Activated CD8-positive, alpha-beta T cell treated with anti-CD3 and anti-CD28 coated beads, Interleukin-2, amount 10 ng/mL, durations not matched to agents 7 days and 5 days (primary cell): ENCODE measurements at regions of chr12 and their contacts with region 1.

Region 1: DNA sequence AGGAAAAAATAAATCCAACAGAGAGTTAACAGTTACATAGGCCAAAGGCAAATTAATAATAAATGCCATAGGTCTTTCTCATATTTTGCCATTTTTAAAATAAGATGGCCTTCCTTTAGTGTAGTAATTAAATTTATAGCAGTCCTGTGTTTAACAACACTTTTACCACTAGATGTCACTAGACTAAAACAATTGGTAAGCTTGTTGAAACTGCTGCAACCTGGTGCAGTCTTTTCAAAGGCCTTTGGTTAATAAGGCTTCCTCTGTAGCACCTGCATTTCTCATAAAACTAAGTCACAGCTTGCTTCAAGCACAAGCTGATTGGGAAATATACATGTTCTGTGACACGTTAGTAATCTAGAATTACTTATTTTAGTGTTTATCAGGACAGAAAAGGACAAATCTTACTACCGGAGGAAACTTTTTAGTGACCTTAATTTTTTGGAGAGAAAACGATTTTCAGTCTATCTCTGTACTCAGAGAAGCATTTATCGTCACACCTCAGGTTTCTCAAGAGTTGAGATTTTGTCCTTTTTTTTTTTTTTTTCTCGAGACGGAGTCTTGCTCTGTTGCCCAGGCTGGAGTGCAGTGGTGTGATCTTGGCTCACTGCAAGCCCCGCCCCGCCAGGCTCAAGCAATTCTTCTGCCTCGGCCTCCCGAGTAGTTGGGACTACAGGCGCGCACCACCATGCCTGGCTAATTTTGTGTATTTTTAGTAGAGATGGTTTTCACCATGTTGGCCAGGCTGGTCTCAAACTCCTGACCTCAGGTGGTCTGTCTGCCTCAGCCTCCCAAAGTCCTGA is 20.0 kb downstream of the BORCS5 start:
- DNase-seq: peak; percentile 54
- ATAC-seq: peak; percentile 64
- H3K4me3 Mint-ChIP-seq: no peak overlapping the region
- H3K27ac Mint-ChIP-seq: peak overlapping the region; percentile 1
- H3K4me1 Mint-ChIP-seq: peaks cover 42% of the 10 kb centered on the region
- H3K27me3 Mint-ChIP-seq: no peaks in the 10 kb centered on the region

Region 2: GRCh38 chr12:12349711-12350665 is 26.9 kb before region 1 on chr12 and contains the start of gene MANSC1:
- CTCF ChIA-PET with region 1: no interaction called
- POLR2A ChIA-PET with region 1: no interaction called
- DNase-seq: peak; percentile 67
- ATAC-seq: peak; percentile 78
- H3K4me3 Mint-ChIP-seq: peak within 1 kb of the TSS; percentile 68
- H3K27ac Mint-ChIP-seq: peak within 1 kb of the TSS; percentile 47
- H3K4me1 Mint-ChIP-seq: peaks cover 21% of the 10 kb centered on the region
- H3K27me3 Mint-ChIP-seq: peaks cover 4% of the 10 kb centered on the region
- total RNA-seq, gene MANSC1: 0.13 TPM in 1 of 2 experiments, not detected in the other

Region 3: GRCh38 chr12:12365931-12366431 is 10.9 kb before region 1 on chr12:
- CTCF ChIA-PET with region 1: interaction called, 12 read pairs
- POLR2A ChIA-PET with region 1: interaction called, 3 read pairs
- DNase-seq: peak; percentile 55
- ATAC-seq: peak; percentile 60
- H3K4me3 Mint-ChIP-seq: no peak overlapping the region
- H3K27ac Mint-ChIP-seq: peak overlapping the region; percentile 32
- H3K4me1 Mint-ChIP-seq: peaks cover 41% of the 10 kb centered on the region
- H3K27me3 Mint-ChIP-seq: no peaks in the 10 kb centered on the region

Region 4: GRCh38 chr12:12474931-12475795 is 98.3 kb after region 1 on chr12:
- CTCF ChIA-PET with region 1: interaction called, 124 read pairs
- POLR2A ChIA-PET with region 1: interaction called, 15 read pairs
- DNase-seq: peak; percentile 73
- ATAC-seq: peak; percentile 88
- H3K4me3 Mint-ChIP-seq: peak overlapping the region; percentile 58
- H3K27ac Mint-ChIP-seq: peak overlapping the region; percentile 92
- H3K4me1 Mint-ChIP-seq: peaks cover 67% of the 10 kb centered on the region
- H3K27me3 Mint-ChIP-seq: no peaks in the 10 kb centered on the region

Region 5: GRCh38 chr12:12505544-12506495 is 129.0 kb after region 1 on chr12:
- CTCF ChIA-PET with region 1: interaction called, 38 read pairs
- POLR2A ChIA-PET with region 1: no interaction called
- DNase-seq: peak; percentile 24
- ATAC-seq: peak; percentile 52
- H3K4me3 Mint-ChIP-seq: no peak overlapping the region
- H3K27ac Mint-ChIP-seq: peak overlapping the region; percentile 19
- H3K4me1 Mint-ChIP-seq: peaks cover 30% of the 10 kb centered on the region
- H3K27me3 Mint-ChIP-seq: no peaks in the 10 kb centered on the region

Region 6: DNA sequence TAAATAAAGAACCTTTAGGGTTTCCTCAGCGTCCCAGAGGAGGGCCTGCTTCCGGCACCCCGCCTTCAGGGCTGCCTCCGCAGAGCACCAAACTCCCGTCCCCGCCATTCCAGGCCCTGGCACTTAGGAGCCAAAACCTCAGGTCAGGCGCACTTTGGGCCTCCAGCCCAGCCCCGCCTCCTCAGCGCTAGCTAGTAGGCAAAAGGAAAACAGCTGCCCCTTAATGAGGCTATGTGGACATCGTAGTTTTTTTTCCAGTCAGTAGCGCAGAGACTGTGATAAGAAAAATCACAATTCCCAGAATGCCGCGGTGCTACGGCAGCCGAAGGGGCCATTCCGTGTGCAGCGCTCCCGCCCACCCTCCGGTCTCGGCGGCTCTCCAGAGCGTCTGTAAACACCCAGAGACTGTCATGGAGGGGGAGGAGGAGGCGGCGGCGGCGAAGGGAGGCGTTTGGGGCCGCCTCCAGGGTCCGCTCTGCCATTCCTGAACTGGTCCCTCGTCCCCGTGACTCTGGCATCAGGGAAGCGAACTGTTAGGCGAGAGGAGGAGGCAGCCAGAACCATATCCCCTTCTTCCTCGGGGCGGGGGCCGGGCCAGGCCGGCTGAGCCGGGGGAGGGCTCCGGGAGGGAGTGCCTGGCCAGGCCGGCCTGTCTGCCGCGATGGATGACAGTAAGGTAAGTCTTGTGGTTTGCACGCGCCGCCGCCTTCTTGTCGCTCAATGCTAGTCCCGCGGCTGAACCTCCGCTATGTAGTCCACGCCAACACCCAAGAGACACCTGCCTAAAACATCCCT is 234.9 kb after region 1 on chr12 and contains the start of gene CREBL2:
- CTCF ChIA-PET with region 1: interaction called, 19 read pairs
- POLR2A ChIA-PET with region 1: interaction called, 4 read pairs
- DNase-seq: peak; percentile 89
- ATAC-seq: peak; percentile 91
- H3K4me3 Mint-ChIP-seq: peak within 1 kb of the TSS; percentile 85
- H3K27ac Mint-ChIP-seq: peak within 1 kb of the TSS; percentile 94
- H3K4me1 Mint-ChIP-seq: peaks cover 40% of the 10 kb centered on the region
- H3K27me3 Mint-ChIP-seq: no peaks in the 10 kb centered on the region
- total RNA-seq, gene CREBL2: 13.2 to 14.3 TPM

Region 7: GRCh38 chr12:12704593-12705230 is 327.9 kb after region 1 on chr12:
- CTCF ChIA-PET with region 1: interaction called, 25 read pairs
- POLR2A ChIA-PET with region 1: interaction called, 4 read pairs
- DNase-seq: no peak
- ATAC-seq: peak; percentile 54
- H3K4me3 Mint-ChIP-seq: no peak overlapping the region
- H3K27ac Mint-ChIP-seq: no peak overlapping the region
- H3K4me1 Mint-ChIP-seq: peaks cover 21% of the 10 kb centered on the region
- H3K27me3 Mint-ChIP-seq: no peaks in the 10 kb centered on the region